IMR-90 (cell line): ENCODE measurements at regions of chr2 and their contacts with region 1.

Region 1: GRCh38 chr2:81148323-81148722 is 843.8 kb upstream of the LRRTM1 start:
- DNase-seq: no peak
- ATAC-seq: no peak
- H3K4me3 ChIP-seq: no peak overlapping the region
- H3K27ac ChIP-seq: no peak overlapping the region
- H3K4me1 ChIP-seq: no peaks in the 10 kb centered on the region
- H3K27me3 ChIP-seq: no peaks in the 10 kb centered on the region
- CTCF ChIP-seq: no peak
- POLR2A ChIP-seq: no peak
- RAD21 ChIP-seq: no peak

Region 2: DNA sequence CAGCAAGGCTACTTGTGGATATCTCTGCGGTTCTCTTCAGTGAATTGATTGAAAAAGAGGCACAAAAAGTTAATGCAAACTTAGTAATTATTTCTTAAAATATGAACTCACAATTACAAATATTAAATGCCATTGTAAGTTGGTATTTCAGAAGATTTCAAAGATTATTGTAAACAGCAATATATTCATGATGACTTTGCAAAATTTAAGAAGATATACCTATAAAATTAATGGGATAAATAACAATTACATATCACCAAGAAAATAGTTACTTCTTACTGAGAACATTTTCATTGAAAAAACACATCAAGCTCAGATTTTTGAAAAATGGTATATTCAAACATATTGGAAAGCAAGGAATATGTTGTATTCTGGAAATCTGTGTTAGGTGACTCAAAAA is 361.7 kb before region 1 on chr2:
- CTCF ChIA-PET with region 1: no interaction called
- POLR2A ChIA-PET with region 1: no interaction called
- dilution Hi-C with region 1: no loop called
- in situ Hi-C with region 1: no loop called
- intact Hi-C with region 1: no loop called
- DNase-seq: no peak
- ATAC-seq: no peak
- H3K4me3 ChIP-seq: no peak overlapping the region
- H3K27ac ChIP-seq: no peak overlapping the region
- H3K4me1 ChIP-seq: no peaks in the 10 kb centered on the region
- H3K27me3 ChIP-seq: no peaks in the 10 kb centered on the region
- CTCF ChIP-seq: no peak
- POLR2A ChIP-seq: no peak
- RAD21 ChIP-seq: no peak

Region 3: GRCh38 chr2:81940266-81940955 is 792.1 kb after region 1 on chr2:
- CTCF ChIA-PET with region 1: no interaction called
- POLR2A ChIA-PET with region 1: interaction called, 10 read pairs
- dilution Hi-C with region 1: no loop called
- in situ Hi-C with region 1: no loop called
- intact Hi-C with region 1: no loop called
- DNase-seq: no peak
- ATAC-seq: no peak
- H3K4me3 ChIP-seq: no peak overlapping the region
- H3K27ac ChIP-seq: no peak overlapping the region
- H3K4me1 ChIP-seq: no peaks in the 10 kb centered on the region
- H3K27me3 ChIP-seq: no peaks in the 10 kb centered on the region
- CTCF ChIP-seq: no peak
- POLR2A ChIP-seq: no peak
- RAD21 ChIP-seq: no peak